ENCODE measurements at regions of chr7 and their contacts with region 1.

Region 1: GRCh38 chr7:37234928-37235327 is 213.7 kb downstream of the ELMO1 start:
- DNase-seq: peak; percentile 8
- ATAC-seq: peak; percentile 65
- H3K4me3 ChIP-seq: no peak overlapping the region
- H3K27ac ChIP-seq: no peak overlapping the region
- H3K4me1 ChIP-seq: no peaks in the 10 kb centered on the region
- H3K27me3 ChIP-seq: peaks cover 57% of the 10 kb centered on the region
- CTCF ChIP-seq: peak; percentile 56 to 73 (median 56); a peak in 5 of 6 replicates
- POLR2A ChIP-seq: no peak
- RAD21 ChIP-seq: peak; percentile 72

Region 2: DNA sequence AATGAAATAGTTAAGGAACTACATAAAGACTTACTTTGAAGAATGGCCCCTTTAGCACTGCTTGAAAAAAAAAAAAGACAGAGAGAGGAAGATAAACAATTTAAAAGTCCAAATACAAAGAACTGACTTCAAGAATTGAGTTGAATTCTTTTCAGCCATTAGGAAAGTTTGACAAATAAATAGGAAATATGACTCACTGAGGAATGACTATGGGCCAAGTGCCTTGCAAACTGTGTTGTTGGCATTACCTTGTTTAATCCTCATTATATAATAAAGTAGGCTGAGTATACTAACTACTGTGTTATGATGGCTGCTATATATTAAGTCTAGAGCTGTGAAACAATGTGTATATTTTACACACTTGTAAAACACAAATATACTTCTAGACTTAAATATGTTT is 62.6 kb after region 1 on chr7:
- CTCF ChIA-PET with region 1: no interaction called
- POLR2A ChIA-PET with region 1: no interaction called
- RAD21 ChIA-PET with region 1: no interaction called
- intact Hi-C with region 1: no loop called
- DNase-seq: no peak
- ATAC-seq: no peak
- H3K4me3 ChIP-seq: no peak overlapping the region
- H3K27ac ChIP-seq: no peak overlapping the region
- H3K4me1 ChIP-seq: no peaks in the 10 kb centered on the region
- H3K27me3 ChIP-seq: peaks cover 5% of the 10 kb centered on the region
- CTCF ChIP-seq: no peak
- POLR2A ChIP-seq: no peak
- RAD21 ChIP-seq: no peak

Region 3: DNA sequence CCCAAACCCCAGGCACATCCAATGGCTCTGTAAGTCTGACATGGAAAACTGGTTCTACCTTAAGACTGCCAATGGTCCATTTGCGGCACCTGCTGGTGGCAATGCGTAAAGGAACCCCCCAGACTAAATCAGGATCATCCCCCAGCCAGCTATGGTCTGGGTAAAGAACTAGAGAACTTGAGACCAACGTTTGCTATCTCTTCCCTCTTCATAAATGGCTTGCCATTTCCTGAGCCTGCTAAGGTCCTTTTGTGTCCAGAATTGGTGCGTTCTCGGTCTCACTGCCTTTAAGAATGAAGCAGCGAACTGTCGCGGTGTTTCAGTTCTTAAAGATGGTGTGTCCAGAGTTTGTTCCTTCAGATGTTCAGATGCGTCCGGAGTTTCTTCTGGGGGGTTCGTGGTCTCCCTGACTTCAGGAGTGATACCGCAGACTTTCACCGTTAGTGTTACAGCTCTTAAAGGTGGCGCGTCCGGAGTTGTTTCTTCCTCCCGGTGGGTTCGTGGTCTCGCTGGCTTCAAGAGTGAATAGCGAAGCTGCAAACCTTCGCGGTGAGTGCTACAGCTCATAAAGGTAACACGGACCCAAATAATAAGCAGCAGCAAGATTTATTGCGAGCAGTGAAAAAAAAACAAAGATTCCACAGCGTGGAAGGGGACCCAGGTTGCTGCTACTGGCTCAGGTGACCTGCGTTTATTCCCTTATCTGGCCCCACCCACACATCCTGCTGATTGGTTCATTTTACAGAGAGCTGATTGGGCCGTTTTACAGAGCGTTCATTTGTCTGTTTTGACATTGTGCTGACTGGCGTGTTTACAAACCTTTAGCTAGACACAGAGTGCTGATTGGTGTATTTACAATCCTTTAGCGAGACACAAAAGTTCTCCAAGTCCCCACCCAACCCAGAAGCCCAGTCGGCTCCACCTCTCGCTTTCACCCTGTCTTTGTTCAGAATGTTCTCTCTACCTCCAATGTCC is 118.3 kb after region 1 on chr7:
- CTCF ChIA-PET with region 1: interaction called, 22 read pairs
- POLR2A ChIA-PET with region 1: no interaction called
- RAD21 ChIA-PET with region 1: no interaction called
- intact Hi-C with region 1: loop called (anchors 1 kb)
- DNase-seq: peak; percentile 15
- ATAC-seq: peak; percentile 82
- H3K4me3 ChIP-seq: no peak overlapping the region
- H3K27ac ChIP-seq: no peak overlapping the region
- H3K4me1 ChIP-seq: no peaks in the 10 kb centered on the region
- H3K27me3 ChIP-seq: peaks cover 8% of the 10 kb centered on the region; the same call in 1 of the 2 replicates
- CTCF ChIP-seq: peak; percentile 48 to 68 (median 63); a peak in 5 of 6 replicates
- POLR2A ChIP-seq: no peak
- RAD21 ChIP-seq: peak; percentile 66

Region 4: GRCh38 chr7:37495574-37496184 is 260.8 kb after region 1 on chr7:
- CTCF ChIA-PET with region 1: interaction called, 8 read pairs
- POLR2A ChIA-PET with region 1: no interaction called
- RAD21 ChIA-PET with region 1: no interaction called
- intact Hi-C with region 1: loop called (anchors 5 kb)
- DNase-seq: no peak
- ATAC-seq: no peak
- H3K4me3 ChIP-seq: no peak overlapping the region
- H3K27ac ChIP-seq: no peak overlapping the region
- H3K4me1 ChIP-seq: no peaks in the 10 kb centered on the region
- H3K27me3 ChIP-seq: no peaks in the 10 kb centered on the region
- CTCF ChIP-seq: peak; percentile 18 to 61 (median 45); a peak in 4 of 6 replicates
- POLR2A ChIP-seq: no peak
- RAD21 ChIP-seq: no peak

Region 5: GRCh38 chr7:37833107-37833817 is 598.3 kb after region 1 on chr7:
- CTCF ChIA-PET with region 1: interaction called, 3 read pairs
- POLR2A ChIA-PET with region 1: no interaction called
- RAD21 ChIA-PET with region 1: interaction called in 1 of 2 experiments, 3 read pairs
- intact Hi-C with region 1: loop called (anchors 5 kb)
- DNase-seq: peak; percentile 7
- ATAC-seq: peak; percentile 49; the same call in 1 of the 2 replicates
- H3K4me3 ChIP-seq: no peak overlapping the region
- H3K27ac ChIP-seq: no peak overlapping the region
- H3K4me1 ChIP-seq: peaks cover 0 to 3% of the 10 kb centered on the region in 2 experiments; a peak in 1 of 4 replicates
- H3K27me3 ChIP-seq: no peaks in the 10 kb centered on the region; the same call in 1 of the 2 replicates
- CTCF ChIP-seq: peak; percentile 26 to 58 (median 47); a peak in 5 of 6 replicates
- POLR2A ChIP-seq: no peak
- RAD21 ChIP-seq: peak; percentile 61

Region 6: DNA sequence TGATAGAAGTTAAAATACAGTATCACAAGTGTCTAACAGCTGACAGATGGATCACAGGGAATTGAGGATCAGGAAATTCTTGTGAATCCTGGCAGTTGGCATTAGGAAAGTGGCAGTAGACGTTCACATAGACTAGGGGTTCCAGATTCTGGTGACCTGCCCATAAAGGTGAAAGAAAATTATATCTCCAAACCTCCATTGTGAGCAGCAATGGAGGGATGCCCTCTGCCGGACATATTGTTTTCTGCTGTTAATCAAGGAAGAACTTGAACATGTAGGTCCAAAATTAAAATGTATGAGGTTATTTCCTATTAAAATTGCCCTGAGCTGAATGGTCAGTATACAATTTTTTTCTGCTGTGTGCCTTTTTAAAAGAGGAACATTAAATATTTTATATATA is 618.5 kb after region 1 on chr7:
- CTCF ChIA-PET with region 1: interaction called, 5 read pairs
- POLR2A ChIA-PET with region 1: no interaction called
- RAD21 ChIA-PET with region 1: no interaction called
- intact Hi-C with region 1: loop called (anchors 5 kb)
- DNase-seq: peak; percentile 13
- ATAC-seq: no peak
- H3K4me3 ChIP-seq: no peak overlapping the region
- H3K27ac ChIP-seq: no peak overlapping the region
- H3K4me1 ChIP-seq: no peaks in the 10 kb centered on the region
- H3K27me3 ChIP-seq: no peaks in the 10 kb centered on the region; the same call in 1 of the 2 replicates
- CTCF ChIP-seq: peak; percentile 21 to 58 (median 51); a peak in 4 of 6 replicates
- POLR2A ChIP-seq: no peak
- RAD21 ChIP-seq: peak; percentile 27; the same call in 1 of the 2 replicates

Region 7: GRCh38 chr7:38369816-38370493 is 1135.0 kb after region 1 on chr7:
- CTCF ChIA-PET with region 1: interaction called, 6 read pairs
- POLR2A ChIA-PET with region 1: no interaction called
- RAD21 ChIA-PET with region 1: no interaction called
- intact Hi-C with region 1: loop called (anchors 10 kb)
- DNase-seq: peak; percentile 80
- ATAC-seq: peak; percentile 91
- H3K4me3 ChIP-seq: no peak overlapping the region
- H3K27ac ChIP-seq: no peak overlapping the region
- H3K4me1 ChIP-seq: peaks cover 0 to 7% of the 10 kb centered on the region in 2 experiments; a peak in 2 of 4 replicates
- H3K27me3 ChIP-seq: no peaks in the 10 kb centered on the region
- CTCF ChIP-seq: peak; percentile 63 to 95 (median 94); a peak in 5 of 6 replicates
- POLR2A ChIP-seq: no peak
- RAD21 ChIP-seq: peak; percentile 20; the same call in 1 of the 2 replicates